Endothelial cell of umbilical vein (primary cell): ENCODE measurements at regions of chrX and their contacts with region 1.

Region 1: GRCh38 chrX:57821703-57822375 is 88.4 kb downstream of the ZXDA start:
- DNase-seq: peak; percentile 67
- H3K4me3 ChIP-seq: no peak overlapping the region
- H3K27ac ChIP-seq: no peak overlapping the region
- H3K4me1 ChIP-seq: no peaks in the 10 kb centered on the region
- H3K27me3 ChIP-seq: no peaks in the 10 kb centered on the region
- CTCF ChIP-seq: peak; percentile 29 to 40
- POLR2A ChIP-seq: no peak

Region 2: DNA sequence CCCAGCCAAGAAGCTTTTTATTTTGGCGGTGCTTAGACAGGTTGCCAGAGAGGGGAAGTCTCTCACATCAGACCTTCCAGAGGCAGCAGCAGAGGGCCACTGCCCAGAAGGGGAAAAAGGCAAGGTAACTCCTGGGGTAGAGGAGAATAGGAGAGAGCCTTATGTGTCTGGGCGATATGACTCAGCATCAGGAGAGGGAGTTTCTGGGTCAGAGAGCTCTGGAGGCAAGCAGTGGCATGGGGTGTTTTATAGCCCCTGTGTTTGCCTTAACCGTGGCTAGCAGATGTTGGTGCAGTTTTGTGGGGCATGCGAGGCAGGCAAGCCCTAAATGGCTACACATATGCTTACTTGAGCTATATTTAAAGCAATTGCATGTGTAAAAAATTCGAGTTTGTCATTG is 238.4 kb before region 1 on chrX:
- CTCF ChIA-PET with region 1: no interaction called
- POLR2A ChIA-PET with region 1: no interaction called
- dilution Hi-C with region 1: no loop called
- intact Hi-C with region 1: loop called (anchors 2 kb)
- DNase-seq: no peak
- H3K4me3 ChIP-seq: no peak overlapping the region
- H3K27ac ChIP-seq: no peak overlapping the region
- H3K4me1 ChIP-seq: no peaks in the 10 kb centered on the region
- H3K27me3 ChIP-seq: no peaks in the 10 kb centered on the region
- CTCF ChIP-seq: no peak
- POLR2A ChIP-seq: no peak

Region 3: DNA sequence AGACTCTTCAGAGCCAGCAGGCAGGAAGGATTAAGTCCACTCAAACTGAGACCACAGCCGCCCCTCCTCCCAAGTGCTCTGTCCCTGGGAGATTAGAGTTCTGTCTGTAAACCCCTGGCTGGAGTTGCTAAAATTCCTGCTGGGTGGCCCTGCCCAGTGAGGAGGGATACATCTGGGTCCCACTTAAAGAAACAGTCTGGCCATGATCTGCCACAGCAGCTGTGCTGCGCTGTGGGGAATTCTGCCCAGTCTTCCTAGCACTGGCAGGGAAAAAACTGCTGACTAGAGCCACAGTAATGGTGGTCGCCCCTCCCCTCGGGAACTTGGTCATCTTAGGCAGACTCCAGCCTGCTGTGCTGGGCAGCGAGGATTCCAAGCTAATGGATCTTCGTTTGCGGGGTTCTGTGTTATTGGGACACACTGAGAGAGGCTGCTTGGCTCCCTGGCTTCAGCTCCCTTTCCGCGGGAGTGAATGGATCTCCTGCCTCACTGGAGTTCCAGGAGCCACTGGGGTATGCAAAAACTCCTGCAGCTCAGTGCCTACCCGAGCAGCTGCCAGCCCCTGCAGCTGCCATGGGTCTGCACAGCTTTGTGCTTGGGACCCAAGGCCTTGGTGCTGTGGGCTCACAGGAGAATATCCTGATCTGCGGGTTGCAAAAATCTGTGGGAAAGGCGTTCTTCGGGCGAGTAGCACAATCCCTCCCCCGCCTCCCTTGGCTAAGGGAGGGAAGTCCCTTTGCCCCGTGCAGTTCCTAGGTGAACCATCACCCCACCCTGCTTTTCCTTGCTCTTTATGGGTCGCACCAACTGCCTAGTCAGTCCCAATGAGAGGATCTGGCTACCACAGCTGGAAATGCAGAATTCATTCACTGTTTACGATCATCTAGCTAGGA is 214.3 kb before region 1 on chrX:
- CTCF ChIA-PET with region 1: no interaction called
- POLR2A ChIA-PET with region 1: no interaction called
- dilution Hi-C with region 1: no loop called
- intact Hi-C with region 1: no loop called
- DNase-seq: no peak
- H3K4me3 ChIP-seq: no peak overlapping the region
- H3K27ac ChIP-seq: no peak overlapping the region
- H3K4me1 ChIP-seq: no peaks in the 10 kb centered on the region
- H3K27me3 ChIP-seq: no peaks in the 10 kb centered on the region
- CTCF ChIP-seq: no peak
- POLR2A ChIP-seq: no peak

Region 4: DNA sequence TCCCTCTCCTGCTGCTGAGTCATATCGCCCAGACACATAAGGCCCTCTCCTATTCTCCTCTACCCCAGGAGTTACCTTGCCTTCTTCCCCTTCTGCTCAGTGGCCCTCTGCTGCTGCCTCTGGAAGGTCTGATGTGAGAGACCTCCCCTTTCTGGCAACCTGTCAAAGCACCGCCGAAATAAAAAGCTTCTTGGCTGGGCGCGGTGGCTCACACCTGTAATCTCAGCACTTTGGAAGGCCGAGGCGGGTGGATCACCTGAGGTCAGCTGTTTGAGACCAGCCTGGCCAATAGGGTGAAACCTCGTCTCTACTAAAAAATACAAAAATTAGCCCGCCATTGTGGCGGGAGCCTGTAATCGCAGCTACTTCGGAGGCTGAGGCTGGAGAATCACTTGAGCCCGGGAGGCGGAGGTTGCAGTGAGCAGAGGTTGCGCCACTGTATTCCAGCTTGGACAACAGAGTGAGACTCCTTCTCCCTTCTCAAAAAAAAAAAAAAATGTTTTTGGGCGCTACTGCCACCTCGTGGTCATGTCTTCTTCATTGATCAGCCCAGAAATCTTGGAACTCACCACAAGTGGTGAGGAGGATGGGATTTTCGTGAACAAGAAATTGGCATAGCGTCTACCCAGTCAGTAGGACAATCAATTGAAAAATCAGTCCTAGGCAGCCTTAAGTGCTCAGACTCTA is 97.1 kb after region 1 on chrX:
- CTCF ChIA-PET with region 1: interaction called, 55 read pairs
- POLR2A ChIA-PET with region 1: no interaction called
- dilution Hi-C with region 1: no loop called
- intact Hi-C with region 1: loop called (anchors 1 kb)
- DNase-seq: peak; percentile 30
- H3K4me3 ChIP-seq: no peak overlapping the region
- H3K27ac ChIP-seq: no peak overlapping the region
- H3K4me1 ChIP-seq: no peaks in the 10 kb centered on the region
- H3K27me3 ChIP-seq: no peaks in the 10 kb centered on the region
- CTCF ChIP-seq: peak; percentile 24 to 36
- POLR2A ChIP-seq: no peak

Region 5: DNA sequence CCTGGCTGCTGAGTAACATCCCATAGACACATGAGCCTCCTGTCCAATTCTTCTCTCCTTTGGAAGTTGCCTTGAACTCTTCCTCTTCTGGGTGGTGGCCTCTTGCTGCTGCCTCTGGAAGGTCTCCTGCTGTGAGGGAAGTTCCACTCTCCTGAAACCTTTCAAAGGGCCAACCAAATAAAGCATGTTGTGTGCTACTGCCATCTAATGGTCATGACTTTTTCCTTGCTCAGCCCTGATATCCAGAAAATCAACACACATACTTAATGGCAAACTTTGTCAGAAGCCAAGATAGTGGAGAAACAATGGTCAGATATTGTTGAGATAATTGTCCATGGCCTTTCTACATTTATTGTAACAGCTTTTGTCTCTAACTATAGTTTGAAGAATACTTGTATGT is 107.5 kb after region 1 on chrX:
- CTCF ChIA-PET with region 1: interaction called, 12 read pairs
- POLR2A ChIA-PET with region 1: no interaction called
- dilution Hi-C with region 1: no loop called
- intact Hi-C with region 1: loop called (anchors 1 kb)
- DNase-seq: peak; percentile 37
- H3K4me3 ChIP-seq: no peak overlapping the region
- H3K27ac ChIP-seq: no peak overlapping the region
- H3K4me1 ChIP-seq: no peaks in the 10 kb centered on the region
- H3K27me3 ChIP-seq: no peaks in the 10 kb centered on the region
- CTCF ChIP-seq: peak; percentile 8 to 27
- POLR2A ChIP-seq: no peak

Region 6: DNA sequence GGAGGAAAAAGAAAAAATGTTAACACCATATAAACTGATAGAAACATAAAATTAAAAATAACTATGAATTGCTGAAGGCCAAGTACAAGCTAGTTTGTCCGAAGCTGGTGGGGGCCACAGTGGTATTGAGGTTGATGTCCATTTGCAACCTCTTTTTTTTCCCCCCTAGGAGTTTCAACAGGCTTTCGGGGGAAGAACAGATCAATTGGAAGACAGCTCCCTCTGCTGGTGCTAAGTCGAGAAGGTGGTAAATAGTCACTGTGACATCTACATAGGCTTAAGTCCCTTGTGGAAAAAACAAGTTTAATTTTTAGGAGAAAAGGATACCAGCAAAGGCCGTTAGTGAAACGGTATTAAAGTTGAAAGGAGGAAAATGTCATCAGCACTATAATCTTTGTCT is 204.1 kb after region 1 on chrX:
- CTCF ChIA-PET with region 1: interaction called, 17 read pairs
- POLR2A ChIA-PET with region 1: no interaction called
- dilution Hi-C with region 1: no loop called
- intact Hi-C with region 1: no loop called
- DNase-seq: peak; percentile 19
- H3K4me3 ChIP-seq: no peak overlapping the region
- H3K27ac ChIP-seq: no peak overlapping the region
- H3K4me1 ChIP-seq: no peaks in the 10 kb centered on the region
- H3K27me3 ChIP-seq: no peaks in the 10 kb centered on the region
- CTCF ChIP-seq: peak; percentile 14 to 36
- POLR2A ChIP-seq: no peak